ENCODE measurements at regions of chr5 and their contacts with region 1.

Region 1: DNA sequence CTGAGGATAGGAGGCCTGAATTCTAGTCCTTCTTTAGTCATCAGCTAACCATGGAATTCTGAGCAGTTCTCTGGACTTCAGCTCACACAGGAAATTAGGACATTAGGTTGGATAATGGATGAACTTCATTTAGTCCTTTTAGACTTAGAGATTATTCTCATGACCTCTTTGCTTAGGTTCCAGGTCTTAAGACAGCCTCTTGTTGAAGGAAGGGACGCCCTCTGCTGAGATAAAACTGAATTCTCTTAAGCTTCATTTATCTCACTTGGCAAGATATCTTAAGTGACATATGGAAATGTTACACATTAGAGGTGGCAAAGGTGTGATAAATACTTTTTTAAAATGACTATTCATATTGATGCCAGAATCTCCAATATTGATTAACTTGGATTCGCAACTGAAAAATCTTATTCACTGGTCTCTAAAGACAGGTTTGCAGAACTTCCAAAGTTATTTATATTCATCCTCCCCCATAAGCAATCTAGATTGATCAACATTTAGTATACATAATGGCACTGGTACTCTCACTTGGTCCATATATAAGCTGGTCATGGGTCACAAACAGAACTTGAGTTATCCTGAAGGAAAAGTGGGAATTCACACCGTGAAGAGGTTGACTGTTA is 16.9 kb upstream of the ZNF366 start:
- DNase-seq: peak; percentile 33
- ATAC-seq: no peak
- H3K4me3 ChIP-seq: no peak overlapping the region
- H3K27ac ChIP-seq: no peak overlapping the region
- H3K4me1 ChIP-seq: no peaks in the 10 kb centered on the region
- H3K27me3 ChIP-seq: no peaks in the 10 kb centered on the region
- CTCF ChIP-seq: peak; percentile 53; the same call in 1 of the 2 replicates

Region 2: GRCh38 chr5:72366324-72366976 is 157.6 kb before region 1 on chr5:
- CTCF ChIA-PET with region 1: interaction called, 9 read pairs
- POLR2A ChIA-PET with region 1: no interaction called
- in situ Hi-C with region 1: no loop called
- intact Hi-C with region 1: loop called (anchors 5 kb)
- DNase-seq: peak; percentile 62
- ATAC-seq: peak; percentile 93
- H3K4me3 ChIP-seq: no peak overlapping the region
- H3K27ac ChIP-seq: no peak overlapping the region
- H3K4me1 ChIP-seq: 0 out of 2 replicates have a peak, but pooled peaks cover 2% of the 10 kb centered on the region
- H3K27me3 ChIP-seq: no peaks in the 10 kb centered on the region
- CTCF ChIP-seq: peak; percentile 85

Region 3: DNA sequence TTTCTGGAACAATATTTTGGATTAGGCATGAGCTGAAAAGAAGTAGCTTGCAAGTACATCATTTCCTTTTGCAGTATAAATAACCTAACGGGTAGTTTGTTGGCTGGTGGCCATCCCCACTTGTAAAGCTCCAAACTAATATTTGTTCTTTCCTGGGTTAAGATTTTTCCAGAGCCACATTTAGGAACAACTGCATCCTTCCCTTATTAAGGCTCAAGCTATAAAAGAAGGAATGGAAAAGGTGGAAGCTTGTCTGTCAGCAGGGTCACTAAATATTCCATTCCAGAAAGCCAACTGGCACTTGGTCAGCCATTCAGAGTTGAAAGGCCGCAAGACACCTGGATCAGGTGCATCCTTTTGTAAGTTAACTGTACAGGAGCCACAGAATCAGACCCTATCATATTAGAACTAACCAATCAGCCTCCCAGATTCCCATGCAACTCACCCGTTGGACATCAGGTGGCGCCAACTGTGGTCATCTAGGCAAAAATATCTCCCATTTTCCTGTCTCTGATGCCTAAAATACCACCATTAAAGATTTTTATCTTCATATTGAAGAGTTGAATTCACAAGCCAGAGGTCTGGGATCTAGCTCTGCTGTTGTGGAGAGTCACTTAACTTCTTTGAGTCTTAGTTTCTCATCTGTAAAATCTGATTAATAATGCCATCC is 121.0 kb before region 1 on chr5:
- CTCF ChIA-PET with region 1: no interaction called
- POLR2A ChIA-PET with region 1: no interaction called
- in situ Hi-C with region 1: no loop called
- intact Hi-C with region 1: loop called (anchors 10 kb)
- DNase-seq: no peak
- ATAC-seq: no peak
- H3K4me3 ChIP-seq: no peak overlapping the region
- H3K27ac ChIP-seq: no peak overlapping the region
- H3K4me1 ChIP-seq: no peaks in the 10 kb centered on the region
- H3K27me3 ChIP-seq: no peaks in the 10 kb centered on the region
- CTCF ChIP-seq: peak; percentile 49

Region 4: GRCh38 chr5:72692231-72692637 is 168.2 kb after region 1 on chr5:
- CTCF ChIA-PET with region 1: no interaction called
- POLR2A ChIA-PET with region 1: no interaction called
- in situ Hi-C with region 1: no loop called
- intact Hi-C with region 1: no loop called
- DNase-seq: no peak
- ATAC-seq: no peak
- H3K4me3 ChIP-seq: no peak overlapping the region
- H3K27ac ChIP-seq: no peak overlapping the region
- H3K4me1 ChIP-seq: no peaks in the 10 kb centered on the region
- H3K27me3 ChIP-seq: peaks cover 10% of the 10 kb centered on the region; the same call in 1 of the 2 replicates
- CTCF ChIP-seq: no peak

Measured in Panc1 (cell line).